Panc1 (cell line): ENCODE measurements at regions of chr5 and their contacts with region 1.

Region 1: DNA sequence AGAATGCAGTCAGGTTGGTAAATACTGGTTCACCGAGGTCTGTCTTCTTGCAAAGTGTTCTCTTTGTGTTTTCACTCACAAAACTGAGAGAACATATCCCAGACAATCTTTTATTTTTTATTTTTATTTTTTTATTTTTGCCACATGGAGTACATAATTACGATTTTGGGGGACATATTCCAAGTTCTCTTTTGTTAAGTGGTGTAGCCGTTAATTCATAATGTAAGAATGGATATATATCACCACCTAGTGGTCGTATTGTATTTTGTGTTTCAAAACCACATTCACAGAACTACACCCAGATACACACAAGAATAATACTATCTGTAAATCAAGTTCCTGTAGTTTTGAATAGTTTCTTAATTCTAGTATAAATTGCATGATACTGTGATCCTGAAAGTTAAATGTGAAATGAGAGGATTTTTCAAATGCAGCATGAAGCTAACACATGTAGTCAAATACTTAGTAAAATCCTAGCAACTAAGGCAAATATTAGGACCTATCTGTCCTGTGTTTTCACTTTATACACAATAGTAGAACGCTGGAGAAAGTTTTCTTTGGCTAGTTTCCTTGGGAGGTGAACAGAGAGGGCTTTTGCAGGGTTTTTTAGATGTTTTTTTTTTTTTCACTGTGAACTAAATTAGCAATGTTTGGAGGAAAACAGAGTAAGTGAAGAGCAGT is 92.7 kb downstream of the VCAN start:
- DNase-seq: peak; percentile 20
- ATAC-seq: peak; percentile 62; the same call in 1 of the 2 replicates
- H3K4me3 ChIP-seq: no peak overlapping the region
- H3K27ac ChIP-seq: no peak overlapping the region
- H3K4me1 ChIP-seq: no peaks in the 10 kb centered on the region
- H3K27me3 ChIP-seq: peaks cover 8% of the 10 kb centered on the region
- CTCF ChIP-seq: peak; percentile 51; the same call in 1 of the 2 replicates

Region 2: GRCh38 chr5:82351754-82352145 is 1212.5 kb before region 1 on chr5:
- CTCF ChIA-PET with region 1: no interaction called
- POLR2A ChIA-PET with region 1: no interaction called
- in situ Hi-C with region 1: no loop called
- intact Hi-C with region 1: loop called (anchors 5 kb)
- DNase-seq: peak; percentile 52
- ATAC-seq: peak; percentile 93
- H3K4me3 ChIP-seq: no peak overlapping the region
- H3K27ac ChIP-seq: no peak overlapping the region
- H3K4me1 ChIP-seq: no peaks in the 10 kb centered on the region
- H3K27me3 ChIP-seq: no peaks in the 10 kb centered on the region
- CTCF ChIP-seq: peak; percentile 81

Region 3: DNA sequence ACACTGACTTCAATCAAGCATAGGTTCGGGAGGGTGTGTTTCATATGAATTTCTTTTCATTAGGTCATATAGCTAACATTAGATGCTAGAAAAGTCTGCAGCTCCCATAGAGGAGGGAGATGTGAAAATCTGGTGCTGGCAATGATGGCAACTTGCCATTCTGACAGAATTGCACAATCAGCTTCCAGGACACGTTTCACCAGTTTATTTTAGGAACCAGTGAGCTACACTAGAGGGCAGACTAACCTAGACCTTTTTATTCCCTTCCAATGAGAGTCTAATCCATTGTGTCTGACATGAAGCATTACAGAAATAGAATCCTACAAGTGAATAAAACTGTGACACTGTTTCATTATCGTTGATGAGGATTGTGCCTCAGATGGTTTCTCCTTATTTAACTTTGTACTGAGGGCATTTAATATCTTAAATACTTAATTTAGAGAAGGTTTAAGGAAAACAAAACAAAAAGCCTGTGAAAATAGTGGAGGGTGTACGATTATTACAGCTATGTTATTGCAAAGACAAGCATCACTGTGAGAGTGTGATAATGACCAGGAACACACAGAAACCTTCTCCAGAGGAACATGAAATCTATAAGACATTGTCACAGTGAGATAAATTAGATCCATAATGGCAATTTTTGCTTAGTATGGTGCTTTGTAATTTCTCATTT is 922.7 kb before region 1 on chr5:
- CTCF ChIA-PET with region 1: no interaction called
- POLR2A ChIA-PET with region 1: no interaction called
- in situ Hi-C with region 1: no loop called
- intact Hi-C with region 1: loop called (anchors 5 kb)
- DNase-seq: peak; percentile 57
- ATAC-seq: peak; percentile 73; the same call in 1 of the 2 replicates
- H3K4me3 ChIP-seq: no peak overlapping the region
- H3K27ac ChIP-seq: no peak overlapping the region
- H3K4me1 ChIP-seq: no peaks in the 10 kb centered on the region
- H3K27me3 ChIP-seq: no peaks in the 10 kb centered on the region
- CTCF ChIP-seq: peak; percentile 72

Region 4: GRCh38 chr5:83145882-83146331 is 418.3 kb before region 1 on chr5:
- CTCF ChIA-PET with region 1: no interaction called
- POLR2A ChIA-PET with region 1: no interaction called
- in situ Hi-C with region 1: no loop called
- intact Hi-C with region 1: no loop called
- DNase-seq: no peak
- ATAC-seq: no peak
- H3K4me3 ChIP-seq: no peak overlapping the region
- H3K27ac ChIP-seq: no peak overlapping the region
- H3K4me1 ChIP-seq: peaks cover 3% of the 10 kb centered on the region; the same call in 1 of the 2 replicates
- H3K27me3 ChIP-seq: no peaks in the 10 kb centered on the region
- CTCF ChIP-seq: no peak

Region 5: GRCh38 chr5:83827111-83827541 is 262.9 kb after region 1 on chr5:
- CTCF ChIA-PET with region 1: no interaction called
- POLR2A ChIA-PET with region 1: no interaction called
- in situ Hi-C with region 1: no loop called
- intact Hi-C with region 1: no loop called
- DNase-seq: no peak
- ATAC-seq: no peak
- H3K4me3 ChIP-seq: no peak overlapping the region
- H3K27ac ChIP-seq: no peak overlapping the region
- H3K4me1 ChIP-seq: no peaks in the 10 kb centered on the region
- H3K27me3 ChIP-seq: no peaks in the 10 kb centered on the region
- CTCF ChIP-seq: no peak